ENCODE measurements at regions of chr7 and their contacts with region 1.

Region 1: GRCh38 chr7:7920481-7920880 is 48.1 kb upstream of the GLCCI1 start:
- DNase-seq: no peak
- ATAC-seq: no peak
- H3K4me3 ChIP-seq: no peak overlapping the region
- H3K27ac ChIP-seq: no peak overlapping the region
- H3K4me1 ChIP-seq: no peaks in the 10 kb centered on the region
- H3K27me3 ChIP-seq: no peaks in the 10 kb centered on the region
- CTCF ChIP-seq: no peak

Region 2: DNA sequence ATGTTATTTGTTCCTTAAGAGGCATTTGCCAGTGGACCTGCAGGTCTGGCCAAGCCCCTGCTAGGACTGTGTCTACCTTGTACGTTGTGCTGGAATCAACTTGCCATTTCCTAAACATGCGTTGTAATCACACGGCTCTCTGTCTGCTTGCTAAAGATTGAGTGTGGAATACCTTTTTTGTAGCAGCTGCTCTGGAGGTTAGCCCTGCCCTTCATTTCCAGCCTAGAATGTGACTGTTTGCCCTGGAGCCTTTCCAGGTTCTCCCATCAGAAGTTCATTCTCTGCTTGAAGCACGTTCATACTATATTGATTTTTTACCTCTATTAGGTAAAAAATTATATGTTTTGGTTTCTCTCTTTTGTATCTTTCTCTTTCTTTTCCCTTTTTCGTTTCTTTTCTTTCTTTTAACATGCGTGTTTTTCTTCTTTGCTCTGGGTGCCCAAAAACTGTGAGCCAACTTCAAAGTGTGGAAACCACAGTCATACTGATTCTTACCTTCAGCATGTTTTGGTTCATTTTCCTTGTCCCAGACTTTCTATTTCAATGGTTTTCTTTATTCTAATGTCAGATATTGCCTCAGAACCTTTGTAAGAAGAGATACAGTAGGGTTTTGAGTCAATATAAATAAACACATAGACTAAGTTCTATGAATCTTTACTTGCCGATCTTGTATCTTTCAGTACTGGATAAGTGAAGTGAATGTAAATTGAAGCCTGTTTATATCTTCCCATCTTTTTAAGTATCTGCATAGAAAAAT is 90.2 kb before region 1 on chr7:
- intact Hi-C with region 1: no loop called
- DNase-seq: no peak
- ATAC-seq: no peak
- H3K4me3 ChIP-seq: no peak overlapping the region
- H3K27ac ChIP-seq: no peak overlapping the region
- H3K4me1 ChIP-seq: peaks cover 0 to 9% (median 0%) of the 10 kb centered on the region in 9 donors
- H3K27me3 ChIP-seq: no peaks in the 10 kb centered on the region
- CTCF ChIP-seq: no peak

Region 3: GRCh38 chr7:8035647-8036518 is 115.4 kb after region 1 on chr7:
- intact Hi-C with region 1: loop called in 1 of 10 experiments (anchors 10 kb)
- DNase-seq: no peak
- ATAC-seq: peak in 4 of 8 donors; percentile 17 to 61 (median 35)
- H3K4me3 ChIP-seq: no peak overlapping the region
- H3K27ac ChIP-seq: no peak overlapping the region
- H3K4me1 ChIP-seq: no peaks in the 10 kb centered on the region
- H3K27me3 ChIP-seq: no peaks in the 10 kb centered on the region
- CTCF ChIP-seq: peak in 6 of 9 donors; percentile 15 to 51 (median 38)

Measured in heart right ventricle (tissue), 16 donors.